CD8-positive, alpha-beta T cell (primary cell): ENCODE measurements at regions of chr2 and their contacts with region 1.

Region 1: DNA sequence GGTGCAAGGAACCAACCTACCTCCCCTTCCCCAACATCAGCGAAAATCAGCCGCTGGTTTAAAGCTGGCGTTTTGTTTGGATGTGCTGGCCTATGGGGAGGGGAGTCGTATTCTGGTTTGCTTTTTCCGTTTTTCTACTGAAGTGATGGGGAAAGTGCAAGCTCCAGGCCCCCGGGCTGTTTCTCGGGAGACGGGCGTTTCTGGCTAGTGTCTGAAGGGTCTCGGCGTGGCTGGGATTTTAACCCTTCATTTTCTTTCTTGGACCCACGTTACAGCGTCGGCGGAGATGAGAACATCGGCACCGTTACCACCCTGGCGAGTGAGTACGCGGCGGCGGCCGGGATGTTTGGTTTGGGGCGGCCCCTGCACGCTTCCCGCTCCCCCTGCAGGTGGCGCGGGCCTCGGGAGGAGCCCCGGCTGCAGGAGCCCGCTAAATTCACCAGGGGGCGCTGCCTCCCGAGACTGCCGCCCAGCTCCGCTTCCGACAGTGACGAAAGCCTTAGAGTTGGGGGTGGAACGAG is 70.7 kb downstream of the PLB1 start:
- DNase-seq: peak; percentile 83 to 94 (median 89)
- ATAC-seq: peak; percentile 97
- H3K4me3 ChIP-seq: peak overlapping the region; percentile 78 to 82
- H3K4me3 Mint-ChIP-seq: peak overlapping the region; percentile 92
- H3K27ac ChIP-seq: peak overlapping the region in 1 of 2 experiments; percentile 71
- H3K27ac Mint-ChIP-seq: peak overlapping the region; percentile 81
- H3K4me1 ChIP-seq: peaks cover 10% of the 10 kb centered on the region
- H3K4me1 Mint-ChIP-seq: peaks cover 17% of the 10 kb centered on the region
- H3K27me3 ChIP-seq: no peaks in the 10 kb centered on the region
- H3K27me3 Mint-ChIP-seq: no peaks in the 10 kb centered on the region
- CTCF ChIP-seq: peak; percentile 100

Region 2: GRCh38 chr2:28437151-28437811 is 129.3 kb before region 1 on chr2:
- CTCF ChIA-PET with region 1: no interaction called
- POLR2A ChIA-PET with region 1: no interaction called
- intact Hi-C with region 1: no loop called
- DNase-seq: no peak
- ATAC-seq: no peak
- H3K4me3 ChIP-seq: no peak overlapping the region
- H3K4me3 Mint-ChIP-seq: no peak overlapping the region
- H3K27ac ChIP-seq: no peak overlapping the region
- H3K27ac Mint-ChIP-seq: no peak overlapping the region
- H3K4me1 ChIP-seq: no peaks in the 10 kb centered on the region
- H3K4me1 Mint-ChIP-seq: peaks cover 6% of the 10 kb centered on the region
- H3K27me3 ChIP-seq: no peaks in the 10 kb centered on the region
- H3K27me3 Mint-ChIP-seq: no peaks in the 10 kb centered on the region
- CTCF ChIP-seq: no peak

Region 3: DNA sequence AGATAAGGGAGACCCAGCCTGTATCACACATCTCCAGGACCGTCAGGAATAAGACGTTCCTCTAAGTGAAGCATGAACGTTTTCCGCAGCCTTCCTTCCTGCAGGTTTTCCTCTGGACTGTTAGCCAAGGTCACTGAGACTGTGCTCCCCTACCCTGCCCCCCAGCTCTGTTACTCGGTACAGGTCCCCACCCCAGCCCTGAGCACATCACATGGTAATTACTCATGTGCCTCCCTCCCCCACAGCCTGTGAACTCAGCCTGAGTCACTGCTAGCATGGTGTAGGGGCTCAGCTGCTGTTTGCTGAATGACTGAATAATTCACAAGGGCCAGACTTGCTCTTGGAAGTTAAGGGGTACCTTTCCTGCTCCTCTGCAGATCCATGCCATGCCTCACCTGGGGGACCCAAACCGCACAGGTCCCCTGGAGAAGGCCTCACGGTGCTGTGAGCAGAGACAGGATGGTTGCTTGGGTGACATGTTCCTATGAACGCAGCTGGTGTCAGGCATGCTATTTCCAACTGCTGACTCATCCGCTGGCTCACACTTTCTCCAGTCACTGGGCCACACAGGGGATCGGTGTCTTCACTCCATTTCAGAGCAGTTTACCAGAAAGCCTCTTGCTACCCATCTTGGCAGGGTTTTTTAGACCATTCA is 17.4 kb after region 1 on chr2:
- CTCF ChIA-PET with region 1: interaction called, 13 read pairs
- POLR2A ChIA-PET with region 1: interaction called, 3 read pairs
- intact Hi-C with region 1: loop called in 1 of 2 experiments (anchors 2 kb)
- DNase-seq: peak in 6 of 9 experiments; percentile 22 to 50 (median 34)
- ATAC-seq: peak; percentile 55
- H3K4me3 ChIP-seq: no peak overlapping the region
- H3K4me3 Mint-ChIP-seq: no peak overlapping the region
- H3K27ac ChIP-seq: no peak overlapping the region
- H3K27ac Mint-ChIP-seq: no peak overlapping the region
- H3K4me1 ChIP-seq: peaks cover 19% of the 10 kb centered on the region
- H3K4me1 Mint-ChIP-seq: peaks cover 26% of the 10 kb centered on the region
- H3K27me3 ChIP-seq: no peaks in the 10 kb centered on the region
- H3K27me3 Mint-ChIP-seq: peaks cover 3% of the 10 kb centered on the region
- CTCF ChIP-seq: no peak

Region 4: GRCh38 chr2:28709101-28709500 is 142.5 kb after region 1 on chr2:
- CTCF ChIA-PET with region 1: no interaction called
- POLR2A ChIA-PET with region 1: no interaction called
- intact Hi-C with region 1: no loop called
- DNase-seq: no peak
- ATAC-seq: no peak
- H3K4me3 ChIP-seq: no peak overlapping the region
- H3K4me3 Mint-ChIP-seq: no peak overlapping the region
- H3K27ac ChIP-seq: no peak overlapping the region
- H3K27ac Mint-ChIP-seq: no peak overlapping the region
- H3K4me1 ChIP-seq: no peaks in the 10 kb centered on the region
- H3K4me1 Mint-ChIP-seq: no peaks in the 10 kb centered on the region
- H3K27me3 ChIP-seq: no peaks in the 10 kb centered on the region
- H3K27me3 Mint-ChIP-seq: no peaks in the 10 kb centered on the region
- CTCF ChIP-seq: no peak

Region 5: GRCh38 chr2:28751252-28751955 is 184.8 kb after region 1 on chr2 and contains the start of gene PPP1CB:
- CTCF ChIA-PET with region 1: interaction called, 11 read pairs
- POLR2A ChIA-PET with region 1: interaction called, 6 read pairs
- intact Hi-C with region 1: loop called (anchors 1 kb)
- DNase-seq: peak; percentile 93 to 100 (median 95)
- ATAC-seq: peak; percentile 85
- H3K4me3 ChIP-seq: peak within 1 kb of the TSS; percentile 63 to 88
- H3K4me3 Mint-ChIP-seq: peak within 1 kb of the TSS; percentile 93
- H3K27ac ChIP-seq: peak within 1 kb of the TSS; percentile 86 to 97
- H3K27ac Mint-ChIP-seq: peak within 1 kb of the TSS; percentile 96
- H3K4me1 ChIP-seq: peaks cover 46% of the 10 kb centered on the region
- H3K4me1 Mint-ChIP-seq: peaks cover 65% of the 10 kb centered on the region
- H3K27me3 ChIP-seq: no peaks in the 10 kb centered on the region
- H3K27me3 Mint-ChIP-seq: no peaks in the 10 kb centered on the region
- CTCF ChIP-seq: no peak
- total RNA-seq, gene PPP1CB: 331 to 334 TPM

Region 6: GRCh38 chr2:28821295-28821958 is 254.8 kb after region 1 on chr2:
- CTCF ChIA-PET with region 1: interaction called, 8 read pairs
- POLR2A ChIA-PET with region 1: no interaction called
- intact Hi-C with region 1: loop called in 1 of 2 experiments (anchors 1 kb)
- DNase-seq: peak in 8 of 9 experiments; percentile 20 to 82 (median 62)
- ATAC-seq: peak; percentile 92
- H3K4me3 ChIP-seq: no peak overlapping the region
- H3K4me3 Mint-ChIP-seq: no peak overlapping the region
- H3K27ac ChIP-seq: no peak overlapping the region
- H3K27ac Mint-ChIP-seq: no peak overlapping the region
- H3K4me1 ChIP-seq: peaks cover 5% of the 10 kb centered on the region
- H3K4me1 Mint-ChIP-seq: peaks cover 4% of the 10 kb centered on the region
- H3K27me3 ChIP-seq: no peaks in the 10 kb centered on the region
- H3K27me3 Mint-ChIP-seq: no peaks in the 10 kb centered on the region
- CTCF ChIP-seq: peak; percentile 79

Region 7: DNA sequence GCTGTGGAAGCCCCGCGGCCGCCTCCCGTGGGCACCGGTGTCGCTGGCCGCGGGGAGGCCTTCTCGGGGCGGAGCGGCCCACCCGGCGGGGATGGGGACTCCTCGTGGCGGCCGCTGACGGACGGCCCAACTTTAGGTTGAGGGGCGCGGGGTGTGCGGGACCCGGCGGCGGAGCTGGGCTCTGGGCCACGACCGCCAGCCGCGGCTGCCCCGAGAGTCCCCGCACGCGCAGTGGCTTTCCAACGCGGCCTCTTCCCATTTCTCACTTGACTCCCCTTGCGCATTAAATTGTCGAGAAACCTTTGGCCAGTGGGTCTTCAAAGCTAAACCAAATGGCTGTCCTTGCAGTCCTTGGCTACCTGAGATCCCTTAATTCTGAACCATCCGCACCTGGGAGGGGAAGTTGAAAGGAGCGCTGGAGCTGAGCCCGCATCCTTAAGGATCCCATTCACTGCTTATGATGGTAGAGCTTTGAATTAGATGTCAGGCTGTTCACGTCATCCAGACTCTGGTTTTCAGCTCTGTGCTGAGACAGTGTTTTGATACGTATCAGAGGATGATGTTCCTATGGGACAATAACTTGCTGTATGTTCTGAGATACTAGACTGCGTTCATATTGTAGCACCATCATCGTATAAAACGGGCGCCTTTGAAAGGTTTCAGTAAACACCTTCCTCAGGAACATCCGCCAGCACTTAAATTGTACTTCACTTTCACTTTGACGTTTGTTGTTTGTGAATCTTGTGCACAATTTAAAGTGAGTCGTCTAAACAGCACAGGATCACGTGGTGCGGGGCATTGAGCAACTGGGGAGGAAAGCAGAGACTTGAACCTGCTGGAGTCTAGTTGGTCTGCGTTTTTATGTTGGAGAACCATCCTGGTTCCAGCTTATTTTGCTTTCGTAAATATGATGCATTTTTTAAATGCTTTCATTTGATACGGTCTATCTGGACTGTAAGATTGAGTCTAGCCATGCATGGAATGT is 549.5 kb after region 1 on chr2:
- CTCF ChIA-PET with region 1: no interaction called
- POLR2A ChIA-PET with region 1: no interaction called
- intact Hi-C with region 1: loop called in 1 of 2 experiments (anchors 5 kb)
- DNase-seq: peak; percentile 43 to 89 (median 73)
- ATAC-seq: peak; percentile 59
- H3K4me3 ChIP-seq: peak overlapping the region; percentile 80 to 82
- H3K4me3 Mint-ChIP-seq: peak overlapping the region; percentile 91
- H3K27ac ChIP-seq: peak overlapping the region; percentile 86 to 92
- H3K27ac Mint-ChIP-seq: peak overlapping the region; percentile 95
- H3K4me1 ChIP-seq: peaks cover 39% of the 10 kb centered on the region
- H3K4me1 Mint-ChIP-seq: peaks cover 54% of the 10 kb centered on the region
- H3K27me3 ChIP-seq: no peaks in the 10 kb centered on the region
- H3K27me3 Mint-ChIP-seq: no peaks in the 10 kb centered on the region
- CTCF ChIP-seq: no peak